Endothelial cell of umbilical vein (primary cell): ENCODE measurements at regions of chr10 and their contacts with region 1.

Region 1: DNA sequence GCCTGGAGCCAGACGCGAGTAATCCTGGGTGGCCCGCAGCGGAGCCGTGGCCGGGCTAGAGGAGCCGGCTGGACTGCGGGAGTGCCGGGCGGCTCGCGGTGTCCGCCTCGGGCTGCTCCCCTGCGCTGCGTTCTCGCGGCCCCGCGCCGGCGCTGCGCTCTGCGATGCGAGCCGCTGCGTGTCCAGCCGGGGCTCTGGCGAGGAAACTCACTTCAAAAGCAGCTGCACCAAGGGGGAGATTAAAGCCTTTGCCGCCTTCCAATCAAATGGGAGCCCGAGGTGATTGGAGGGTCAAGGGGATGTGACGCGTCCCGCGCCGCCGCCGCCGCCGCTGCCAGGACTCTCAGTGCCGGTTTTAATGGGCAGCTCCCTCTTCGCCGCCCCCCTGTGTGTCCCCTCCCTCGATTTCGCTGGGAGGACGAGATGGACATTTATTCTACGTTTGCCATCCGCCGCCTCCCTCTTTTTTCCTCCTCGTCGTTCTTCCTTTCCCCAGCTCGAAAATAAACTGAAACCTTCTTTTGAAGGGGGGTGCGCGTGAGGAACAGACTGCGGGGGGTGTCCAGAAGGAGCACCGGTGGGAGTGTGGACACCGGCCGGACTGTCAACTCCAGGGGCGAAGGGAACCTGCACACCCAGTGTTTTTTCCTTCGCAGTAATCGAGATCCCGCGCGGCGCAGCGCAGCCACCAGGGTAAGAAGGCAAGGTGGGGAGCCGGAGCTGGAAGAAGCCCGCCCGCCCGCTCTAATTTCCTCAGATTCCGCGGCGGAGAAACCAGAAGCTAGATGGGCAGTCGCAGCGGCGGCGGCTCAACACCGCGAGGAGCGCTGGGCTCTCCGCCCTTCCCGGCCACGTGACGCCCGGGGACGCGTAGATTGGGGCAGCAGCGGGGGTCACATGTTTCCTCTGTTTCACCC is at the start of gene ZNF503:
- DNase-seq: peak; percentile 97
- H3K4me3 ChIP-seq: peak within 1 kb of the TSS; percentile 66 to 81 (median 77)
- H3K27ac ChIP-seq: peak within 1 kb of the TSS; percentile 55
- H3K4me1 ChIP-seq: peaks cover 34% of the 10 kb centered on the region
- H3K27me3 ChIP-seq: peaks cover 19 to 55% of the 10 kb centered on the region in 2 experiments
- CTCF ChIP-seq: peak in 1 of 2 donors; percentile 22
- POLR2A ChIP-seq: peak; percentile 88
- total RNA-seq, gene ZNF503: 2.2 and 2.7 TPM in 2 replicates

Region 2: GRCh38 chr10:75294866-75295701 is 106.7 kb before region 1 on chr10:
- CTCF ChIA-PET with region 1: interaction called, 14 read pairs
- POLR2A ChIA-PET with region 1: no interaction called
- dilution Hi-C with region 1: no loop called
- intact Hi-C with region 1: loop called (anchors 2 kb)
- DNase-seq: peak; percentile 75
- H3K4me3 ChIP-seq: peak overlapping the region; percentile 35 to 54 (median 47)
- H3K27ac ChIP-seq: peak overlapping the region; percentile 4
- H3K4me1 ChIP-seq: peaks cover 13% of the 10 kb centered on the region
- H3K27me3 ChIP-seq: peaks cover 0 to 2% of the 10 kb centered on the region in 2 experiments
- CTCF ChIP-seq: peak; percentile 11 to 20
- POLR2A ChIP-seq: no peak

Region 3: DNA sequence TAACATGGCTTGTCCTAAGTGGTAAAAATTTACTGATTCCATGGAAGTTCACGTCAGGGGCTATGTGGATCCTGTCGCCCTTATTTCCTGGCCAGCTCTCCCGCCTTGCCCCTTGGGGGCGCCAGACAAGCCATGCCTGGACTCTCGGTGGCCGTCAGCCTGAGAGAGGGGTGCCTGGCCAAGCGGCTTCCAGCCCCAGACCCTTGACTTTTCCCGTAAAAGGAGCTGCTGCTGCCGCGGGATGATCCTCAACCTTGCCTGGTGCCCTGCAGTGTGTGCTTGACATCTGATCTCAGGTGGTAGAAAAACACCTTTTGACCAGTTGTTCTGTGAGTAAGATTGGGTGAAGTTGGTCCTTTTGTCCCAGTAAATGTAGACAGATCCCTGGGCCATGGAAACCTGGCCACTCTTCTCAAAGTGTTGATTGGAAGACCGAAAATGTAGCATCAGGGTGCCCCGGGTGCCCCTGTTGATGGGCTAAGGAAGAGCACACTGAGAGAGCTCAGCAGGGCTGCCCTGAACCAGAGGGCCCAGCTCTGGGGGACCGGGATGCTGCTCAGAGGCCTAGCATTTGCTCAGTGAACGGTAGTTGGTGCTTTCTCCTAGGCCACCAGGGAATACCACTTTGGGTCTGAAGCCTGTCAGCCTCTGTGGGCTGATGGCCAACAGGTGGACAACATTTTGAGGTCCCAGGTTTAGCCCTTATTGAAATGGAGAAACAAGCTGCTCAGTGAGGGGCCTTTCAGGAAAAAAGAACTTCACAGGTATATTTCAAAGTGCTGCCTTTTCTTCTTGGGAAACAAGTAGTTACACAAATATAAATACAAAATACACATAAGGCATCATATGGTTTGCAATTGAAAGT is 192.1 kb after region 1 on chr10:
- CTCF ChIA-PET with region 1: no interaction called
- POLR2A ChIA-PET with region 1: no interaction called
- dilution Hi-C with region 1: no loop called
- intact Hi-C with region 1: loop called (anchors 2 kb)
- DNase-seq: no peak
- H3K4me3 ChIP-seq: no peak overlapping the region
- H3K27ac ChIP-seq: no peak overlapping the region
- H3K4me1 ChIP-seq: peaks cover 3% of the 10 kb centered on the region
- H3K27me3 ChIP-seq: peaks cover 0 to 10% of the 10 kb centered on the region in 2 experiments
- CTCF ChIP-seq: no peak
- POLR2A ChIP-seq: no peak

Region 4: GRCh38 chr10:75845176-75845947 is 443.5 kb after region 1 on chr10:
- CTCF ChIA-PET with region 1: no interaction called
- POLR2A ChIA-PET with region 1: no interaction called
- dilution Hi-C with region 1: no loop called
- intact Hi-C with region 1: loop called (anchors 2 kb)
- DNase-seq: peak; percentile 41
- H3K4me3 ChIP-seq: no peak overlapping the region
- H3K27ac ChIP-seq: no peak overlapping the region
- H3K4me1 ChIP-seq: peaks cover 3% of the 10 kb centered on the region
- H3K27me3 ChIP-seq: no peaks in the 10 kb centered on the region
- CTCF ChIP-seq: no peak
- POLR2A ChIP-seq: no peak

Region 5: GRCh38 chr10:75922435-75922834 is 520.6 kb after region 1 on chr10:
- CTCF ChIA-PET with region 1: interaction called, 9 read pairs
- POLR2A ChIA-PET with region 1: no interaction called
- dilution Hi-C with region 1: no loop called
- intact Hi-C with region 1: loop called (anchors 2 kb)
- DNase-seq: no peak
- H3K4me3 ChIP-seq: no peak overlapping the region
- H3K27ac ChIP-seq: no peak overlapping the region
- H3K4me1 ChIP-seq: no peaks in the 10 kb centered on the region
- H3K27me3 ChIP-seq: no peaks in the 10 kb centered on the region
- CTCF ChIP-seq: no peak
- POLR2A ChIP-seq: no peak

Region 6: GRCh38 chr10:76547352-76547972 is 1145.6 kb after region 1 on chr10:
- CTCF ChIA-PET with region 1: interaction called, 41 read pairs
- POLR2A ChIA-PET with region 1: no interaction called
- dilution Hi-C with region 1: no loop called
- intact Hi-C with region 1: loop called (anchors 1 kb)
- DNase-seq: peak; percentile 72
- H3K4me3 ChIP-seq: no peak overlapping the region
- H3K27ac ChIP-seq: no peak overlapping the region
- H3K4me1 ChIP-seq: peaks cover 19% of the 10 kb centered on the region
- H3K27me3 ChIP-seq: no peaks in the 10 kb centered on the region
- CTCF ChIP-seq: peak; percentile 56 to 72
- POLR2A ChIP-seq: no peak